Mammary epithelial cell (primary cell): ENCODE measurements at regions of chr20 and their contacts with region 1.

Region 1: GRCh38 chr20:36861875-36862801 is 13.8 kb upstream of the TLDC2 start:
- DNase-seq: peak; percentile 99
- H3K4me3 ChIP-seq: peak overlapping the region; percentile 46 to 60 (median 58)
- H3K27ac ChIP-seq: peak overlapping the region; percentile 70
- H3K4me1 ChIP-seq: peaks cover 47% of the 10 kb centered on the region
- H3K27me3 ChIP-seq: no peaks in the 10 kb centered on the region
- CTCF ChIP-seq: no peak

Region 2: DNA sequence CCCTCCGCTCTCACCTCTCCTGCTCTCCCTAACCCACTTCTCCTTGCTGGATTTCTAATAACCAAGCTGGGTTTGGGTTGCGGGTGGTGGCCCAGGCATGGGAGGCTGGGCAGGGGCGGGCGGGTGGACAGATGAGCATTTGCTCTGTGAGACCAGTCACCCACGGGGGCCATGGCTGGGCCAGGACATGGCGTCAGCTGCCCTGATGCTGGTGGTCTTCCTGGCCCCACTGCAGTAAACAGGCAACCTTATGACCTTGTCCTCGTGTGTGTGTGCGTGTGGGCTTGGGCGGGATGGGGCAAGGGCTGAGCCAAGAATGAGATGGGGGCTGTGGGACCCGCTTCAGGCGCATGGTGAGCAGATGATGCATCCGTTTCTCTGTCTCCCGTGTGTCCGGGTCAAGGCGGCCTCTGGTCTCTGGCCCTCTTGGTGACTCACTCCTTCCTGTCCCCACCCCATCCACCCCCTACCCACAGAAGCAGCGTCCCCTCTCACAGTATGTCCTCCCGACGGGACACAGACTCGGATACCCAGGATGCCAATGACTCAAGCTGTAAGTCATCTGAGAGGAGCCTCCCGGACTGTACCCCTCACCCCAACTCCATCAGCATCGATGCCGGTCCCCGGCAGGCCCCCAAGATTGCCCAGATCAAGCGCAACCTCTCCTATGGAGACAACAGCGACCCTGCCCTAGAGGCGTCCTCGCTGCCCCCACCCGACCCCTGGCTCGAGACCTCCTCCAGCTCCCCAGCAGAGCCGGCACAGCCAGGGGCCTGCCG is 362.2 kb before region 1 on chr20:
- CTCF ChIA-PET with region 1: no interaction called
- dilution Hi-C with region 1: loop called (anchors 5 kb)
- in situ Hi-C with region 1: no loop called
- intact Hi-C with region 1: no loop called
- DNase-seq: no peak
- H3K4me3 ChIP-seq: no peak overlapping the region
- H3K27ac ChIP-seq: no peak overlapping the region
- H3K4me1 ChIP-seq: no peaks in the 10 kb centered on the region
- H3K27me3 ChIP-seq: no peaks in the 10 kb centered on the region
- CTCF ChIP-seq: no peak

Region 3: GRCh38 chr20:36605399-36606157 is 256.6 kb before region 1 on chr20 and contains the start of gene RAB5IF:
- CTCF ChIA-PET with region 1: no interaction called
- dilution Hi-C with region 1: no loop called
- in situ Hi-C with region 1: no loop called
- intact Hi-C with region 1: loop called (anchors 2 kb)
- DNase-seq: peak; percentile 98
- H3K4me3 ChIP-seq: peak within 1 kb of the TSS; percentile 69 to 95 (median 93)
- H3K27ac ChIP-seq: peak within 1 kb of the TSS; percentile 64
- H3K4me1 ChIP-seq: peaks cover 16% of the 10 kb centered on the region
- H3K27me3 ChIP-seq: no peaks in the 10 kb centered on the region
- CTCF ChIP-seq: peak; percentile 81 to 94
- total RNA-seq, gene RAB5IF: 61.8 to 115 TPM

Region 4: DNA sequence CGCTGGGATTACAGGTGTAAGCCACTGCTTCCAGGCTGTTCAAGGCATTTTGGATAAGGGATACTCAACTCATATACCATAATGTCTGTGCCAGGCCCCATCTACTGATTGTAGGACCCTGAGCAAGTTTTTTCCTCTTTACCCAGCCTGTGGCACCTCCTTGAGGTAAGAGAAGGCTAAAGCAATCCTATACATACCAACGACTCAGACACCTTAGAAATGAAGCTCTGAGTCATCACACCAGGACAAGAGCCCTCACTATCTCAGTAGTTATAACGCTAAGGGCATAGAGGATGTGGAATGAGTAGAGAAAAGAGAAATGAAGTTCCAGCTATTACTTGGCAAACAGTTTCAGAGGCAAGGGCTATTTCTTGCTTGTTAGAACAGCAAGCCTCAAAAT is 133.2 kb before region 1 on chr20:
- CTCF ChIA-PET with region 1: no interaction called
- dilution Hi-C with region 1: no loop called
- in situ Hi-C with region 1: no loop called
- intact Hi-C with region 1: no loop called
- DNase-seq: peak; percentile 58
- H3K4me3 ChIP-seq: no peak overlapping the region
- H3K27ac ChIP-seq: no peak overlapping the region
- H3K4me1 ChIP-seq: peaks cover 5% of the 10 kb centered on the region
- H3K27me3 ChIP-seq: no peaks in the 10 kb centered on the region
- CTCF ChIP-seq: peak; percentile 35 to 39

Region 5: DNA sequence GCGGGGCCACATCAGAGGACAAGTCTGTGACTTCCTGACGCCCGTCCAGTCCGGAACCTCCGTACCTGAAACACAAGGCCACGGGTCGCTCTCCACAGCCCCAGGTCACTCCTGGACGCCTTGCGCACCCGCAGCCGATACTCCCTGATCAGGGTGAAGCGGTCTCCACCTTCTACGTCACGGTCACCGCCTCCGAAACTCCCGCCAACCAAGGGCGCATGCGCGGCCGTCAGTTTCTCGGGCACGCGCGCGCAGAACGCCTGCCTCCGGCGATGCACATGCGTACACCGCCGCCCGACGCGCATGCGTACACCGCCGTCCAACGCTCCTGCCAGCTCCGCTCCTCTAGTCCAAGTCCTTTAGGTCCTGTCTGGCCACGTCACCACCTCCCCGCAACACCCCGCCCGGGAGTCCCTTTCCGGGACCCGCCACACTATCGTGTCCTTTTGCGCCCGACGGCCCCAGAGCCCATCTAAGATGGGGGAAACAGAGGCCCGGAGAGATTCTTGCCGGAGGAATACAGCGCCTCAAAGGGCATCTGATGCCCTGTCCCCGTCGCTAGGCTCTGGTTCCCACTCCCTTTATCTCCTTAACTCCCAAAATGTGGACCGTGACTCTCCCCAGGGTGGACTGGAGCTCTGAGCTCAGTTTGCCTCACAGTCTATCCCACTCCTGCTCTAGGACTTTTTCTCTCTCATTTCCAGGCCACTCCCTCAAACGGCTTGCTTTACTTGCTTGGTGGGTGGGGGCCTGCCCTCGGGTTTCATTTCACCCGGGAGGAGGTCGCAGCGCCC is 88.3 kb before region 1 on chr20 and contains the start of gene DSN1:
- CTCF ChIA-PET with region 1: no interaction called
- dilution Hi-C with region 1: loop called (anchors 5 kb)
- in situ Hi-C with region 1: no loop called
- intact Hi-C with region 1: no loop called
- DNase-seq: peak; percentile 97
- H3K4me3 ChIP-seq: peak within 1 kb of the TSS; percentile 77 to 84 (median 77)
- H3K27ac ChIP-seq: peak within 1 kb of the TSS; percentile 95
- H3K4me1 ChIP-seq: peaks cover 12% of the 10 kb centered on the region
- H3K27me3 ChIP-seq: no peaks in the 10 kb centered on the region
- CTCF ChIP-seq: peak in 1 of 2 donors; percentile 43
- total RNA-seq, gene DSN1: 6.7 to 12.8 TPM

Region 6: DNA sequence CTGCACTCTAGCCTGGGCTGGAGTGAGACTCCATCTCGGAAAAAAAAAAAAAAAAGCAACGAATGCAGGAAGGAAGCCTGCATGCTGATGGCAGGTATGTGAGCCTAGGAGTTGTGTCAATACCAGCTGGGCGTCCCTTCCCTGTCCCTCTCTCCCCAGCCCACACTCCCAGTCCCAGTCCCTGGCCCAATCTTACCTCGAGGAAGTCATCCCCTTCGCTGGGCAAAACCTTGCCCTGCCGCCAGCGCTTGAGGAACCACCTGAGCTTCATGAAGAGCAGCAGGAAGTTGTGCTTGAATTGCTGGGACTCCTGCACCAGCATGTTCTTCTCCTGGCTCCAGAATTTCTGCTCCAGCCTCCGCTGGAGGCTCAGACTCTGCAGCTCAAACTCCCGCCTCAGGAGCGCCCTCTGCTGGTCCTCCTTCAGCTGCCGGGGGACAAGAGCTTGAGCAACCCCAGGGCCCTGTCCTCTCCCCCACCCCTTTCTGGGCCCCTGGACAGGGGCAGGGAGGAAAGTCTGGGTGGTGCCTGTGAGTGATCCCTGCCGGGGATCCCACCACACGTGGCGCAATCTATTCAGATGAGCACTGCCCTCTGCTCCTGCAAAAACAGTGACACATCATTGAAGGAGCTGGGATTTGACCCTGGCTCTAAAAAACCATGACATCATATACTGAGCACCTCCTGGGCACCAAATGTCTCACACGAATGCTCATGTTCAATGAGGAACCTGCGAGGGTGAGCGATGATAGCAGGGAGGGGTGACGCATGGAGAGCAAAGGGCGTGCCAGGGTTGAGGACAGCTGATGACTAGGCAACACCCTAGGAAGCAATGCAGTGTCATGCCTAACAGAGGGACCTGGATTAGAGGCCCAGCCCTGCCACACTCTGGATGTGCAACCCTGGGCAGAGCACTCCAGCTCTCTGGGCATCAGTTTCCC is 53.6 kb before region 1 on chr20:
- CTCF ChIA-PET with region 1: interaction called, 4 read pairs
- dilution Hi-C with region 1: no loop called
- in situ Hi-C with region 1: no loop called
- intact Hi-C with region 1: loop called (anchors 1 kb)
- DNase-seq: peak; percentile 64
- H3K4me3 ChIP-seq: no peak overlapping the region
- H3K27ac ChIP-seq: peak overlapping the region; percentile 40
- H3K4me1 ChIP-seq: no peaks in the 10 kb centered on the region
- H3K27me3 ChIP-seq: no peaks in the 10 kb centered on the region
- CTCF ChIP-seq: peak; percentile 65 to 84

Region 7: DNA sequence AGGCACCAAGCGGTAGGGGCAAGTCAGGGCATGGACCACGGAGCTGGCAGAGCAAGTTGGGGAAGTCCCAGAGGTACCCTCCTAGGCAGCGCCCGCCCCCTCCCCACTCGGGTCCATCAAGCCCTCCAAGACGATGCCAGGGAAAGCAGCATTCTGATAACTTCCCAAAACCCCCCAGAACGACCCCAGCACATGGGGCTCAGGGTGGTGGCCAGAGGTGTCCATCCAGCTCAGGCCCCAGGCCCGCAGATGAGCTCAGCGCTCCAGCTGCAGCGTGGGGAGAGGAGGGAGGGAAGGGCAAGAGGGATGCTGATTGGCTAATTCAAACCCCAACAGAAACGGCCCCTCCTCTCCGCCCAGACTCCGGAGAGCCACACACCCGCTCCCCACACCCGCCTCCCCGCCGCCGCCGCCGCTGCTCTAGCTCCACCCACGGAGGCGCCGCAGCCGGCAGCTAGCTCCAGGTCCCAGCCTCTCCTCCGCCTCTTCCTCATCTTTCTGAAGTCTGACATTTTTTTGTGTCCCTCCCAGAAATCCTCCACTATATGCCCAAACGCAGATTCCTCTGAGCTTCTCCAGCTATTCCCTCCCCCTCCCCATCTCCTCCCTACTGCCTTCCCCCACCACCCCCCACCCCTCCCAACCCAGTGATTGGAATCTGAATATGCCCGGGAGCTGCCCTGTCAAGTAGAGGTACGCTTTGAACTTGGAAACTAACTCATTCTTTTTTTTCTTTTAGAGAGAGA is 26.5 kb before region 1 on chr20:
- CTCF ChIA-PET with region 1: interaction called, 4 read pairs
- dilution Hi-C with region 1: no loop called
- in situ Hi-C with region 1: no loop called
- intact Hi-C with region 1: loop called (anchors 1 kb)
- DNase-seq: peak; percentile 93
- H3K4me3 ChIP-seq: peak overlapping the region; percentile 12 to 17 (median 17)
- H3K27ac ChIP-seq: peak overlapping the region; percentile 72
- H3K4me1 ChIP-seq: peaks cover 33% of the 10 kb centered on the region
- H3K27me3 ChIP-seq: no peaks in the 10 kb centered on the region
- CTCF ChIP-seq: no peak

Region 8: GRCh38 chr20:36957875-36958667 is 95.9 kb after region 1 on chr20:
- CTCF ChIA-PET with region 1: no interaction called
- dilution Hi-C with region 1: no loop called
- in situ Hi-C with region 1: no loop called
- intact Hi-C with region 1: no loop called
- DNase-seq: no peak
- H3K4me3 ChIP-seq: no peak overlapping the region
- H3K27ac ChIP-seq: no peak overlapping the region
- H3K4me1 ChIP-seq: no peaks in the 10 kb centered on the region
- H3K27me3 ChIP-seq: no peaks in the 10 kb centered on the region
- CTCF ChIP-seq: no peak